Gastrocnemius medialis (tissue), 4 donors: ENCODE measurements at regions of chr21 and their contacts with region 1.

Region 1: GRCh38 chr21:30733026-30733425 is 14.0 kb downstream of the KRTAP21-2 start:
- DNase-seq: no peak
- ATAC-seq: no peak
- H3K4me3 ChIP-seq: no peak overlapping the region
- H3K27ac ChIP-seq: no peak overlapping the region
- H3K4me1 ChIP-seq: no peaks in the 10 kb centered on the region
- H3K27me3 ChIP-seq: no peaks in the 10 kb centered on the region
- CTCF ChIP-seq: no peak
- POLR2A ChIP-seq: no peak

Region 2: DNA sequence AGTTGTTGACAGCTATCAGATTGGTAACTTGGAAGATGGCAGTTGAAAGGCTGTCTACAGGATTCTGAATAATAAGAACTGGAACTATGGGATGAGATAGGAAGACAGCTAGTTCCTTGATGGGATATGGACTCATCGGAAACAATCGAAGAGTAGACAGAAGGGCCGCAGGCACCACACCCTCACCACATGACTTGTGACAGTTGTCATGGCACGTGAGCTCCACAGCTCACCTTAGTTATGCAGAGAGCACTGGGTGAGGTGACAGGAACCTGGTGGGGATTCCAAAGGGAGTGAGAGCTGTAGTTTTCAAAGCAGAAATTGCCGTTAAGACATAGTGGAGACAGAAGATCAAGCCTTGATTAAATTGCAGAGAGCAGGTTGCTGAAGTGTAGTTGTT is 435.6 kb before region 1 on chr21:
- in situ Hi-C with region 1: no loop called
- intact Hi-C with region 1: no loop called
- DNase-seq: no peak
- ATAC-seq: no peak
- H3K4me3 ChIP-seq: no peak overlapping the region
- H3K27ac ChIP-seq: no peak overlapping the region
- H3K4me1 ChIP-seq: no peaks in the 10 kb centered on the region
- H3K27me3 ChIP-seq: no peaks in the 10 kb centered on the region
- CTCF ChIP-seq: no peak
- POLR2A ChIP-seq: no peak

Region 3: GRCh38 chr21:30340441-30341241 is 392.4 kb before region 1 on chr21:
- in situ Hi-C with region 1: no loop called
- intact Hi-C with region 1: loop called (anchors 10 kb)
- DNase-seq: no peak
- ATAC-seq: no peak
- H3K4me3 ChIP-seq: no peak overlapping the region
- H3K27ac ChIP-seq: no peak overlapping the region
- H3K4me1 ChIP-seq: no peaks in the 10 kb centered on the region
- H3K27me3 ChIP-seq: no peaks in the 10 kb centered on the region
- CTCF ChIP-seq: peak in 4 of 5 experiments; percentile 33 to 50 (median 38)
- POLR2A ChIP-seq: no peak

Region 4: GRCh38 chr21:30444204-30444603 is 288.8 kb before region 1 on chr21:
- in situ Hi-C with region 1: no loop called
- intact Hi-C with region 1: loop called (anchors 5 kb)
- DNase-seq: no peak
- ATAC-seq: no peak
- H3K4me3 ChIP-seq: no peak overlapping the region
- H3K27ac ChIP-seq: no peak overlapping the region
- H3K4me1 ChIP-seq: no peaks in the 10 kb centered on the region
- H3K27me3 ChIP-seq: no peaks in the 10 kb centered on the region
- CTCF ChIP-seq: no peak
- POLR2A ChIP-seq: no peak

Region 5: DNA sequence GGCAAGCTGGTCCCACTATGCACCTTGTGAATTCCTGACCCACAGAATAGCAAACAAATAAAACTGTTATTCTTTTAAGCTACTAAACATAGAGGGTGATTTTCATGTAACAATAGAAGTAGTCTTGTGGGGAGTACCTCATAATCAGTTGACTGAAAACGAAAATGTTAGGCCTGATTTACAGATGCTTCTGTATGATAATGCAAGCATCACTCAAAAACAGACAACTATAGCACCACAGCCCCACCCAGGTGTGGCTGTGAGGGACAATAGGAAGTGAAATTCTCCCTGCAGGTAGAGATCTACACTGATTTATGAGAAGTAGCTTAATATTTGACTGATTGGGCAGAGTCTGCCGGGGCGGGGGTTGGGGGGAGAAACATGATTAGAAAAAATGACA is 331.8 kb after region 1 on chr21:
- in situ Hi-C with region 1: no loop called
- intact Hi-C with region 1: no loop called
- DNase-seq: no peak
- ATAC-seq: no peak
- H3K4me3 ChIP-seq: no peak overlapping the region
- H3K27ac ChIP-seq: no peak overlapping the region
- H3K4me1 ChIP-seq: no peaks in the 10 kb centered on the region
- H3K27me3 ChIP-seq: no peaks in the 10 kb centered on the region
- CTCF ChIP-seq: no peak
- POLR2A ChIP-seq: no peak